PC-3 (cell line): ENCODE measurements at regions of chr20 and their contacts with region 1.

Region 1: GRCh38 chr20:51667002-51667408 is 101.2 kb downstream of the ATP9A start:
- DNase-seq: peak; percentile 81
- ATAC-seq: peak; percentile 61
- H3K4me3 ChIP-seq: no peak overlapping the region
- H3K27ac ChIP-seq: peak overlapping the region; percentile 89
- H3K4me1 ChIP-seq: peaks cover 42% of the 10 kb centered on the region
- H3K27me3 ChIP-seq: no peaks in the 10 kb centered on the region
- CTCF ChIP-seq: no peak

Region 2: GRCh38 chr20:51742685-51743357 is 75.8 kb after region 1 on chr20:
- CTCF ChIA-PET with region 1: no interaction called
- POLR2A ChIA-PET with region 1: interaction called, 15 read pairs
- intact Hi-C with region 1: loop called (anchors 1 kb)
- DNase-seq: peak; percentile 95
- ATAC-seq: peak; percentile 74
- H3K4me3 ChIP-seq: peak overlapping the region; percentile 2; the same call in 1 of the 2 replicates
- H3K27ac ChIP-seq: peak overlapping the region; percentile 92
- H3K4me1 ChIP-seq: peaks cover 57% of the 10 kb centered on the region
- H3K27me3 ChIP-seq: no peaks in the 10 kb centered on the region
- CTCF ChIP-seq: no peak